A549 (cell line): ENCODE measurements at regions of chr2 and their contacts with region 1.

Region 1: GRCh38 chr2:240913810-240914644 is 7.9 kb downstream of the CROCC2 start:
- DNase-seq: peak; percentile 53 to 66
- ATAC-seq: peak; percentile 41 to 79; a peak in 3 of 6 replicates
- H3K4me3 ChIP-seq: no peak overlapping the region
- H3K27ac ChIP-seq: 0 out of 6 replicates have a peak overlapping the region, but pooled peaks of 1 of the 2 experiments have one; percentile 17
- H3K4me1 ChIP-seq: peaks cover 36% of the 10 kb centered on the region
- CTCF ChIP-seq: peak; percentile 80
- EP300 ChIP-seq: no peak
- POLR2A ChIP-seq: no peak
- RAD21 ChIP-seq: peak; percentile 77 to 87

Region 2: DNA sequence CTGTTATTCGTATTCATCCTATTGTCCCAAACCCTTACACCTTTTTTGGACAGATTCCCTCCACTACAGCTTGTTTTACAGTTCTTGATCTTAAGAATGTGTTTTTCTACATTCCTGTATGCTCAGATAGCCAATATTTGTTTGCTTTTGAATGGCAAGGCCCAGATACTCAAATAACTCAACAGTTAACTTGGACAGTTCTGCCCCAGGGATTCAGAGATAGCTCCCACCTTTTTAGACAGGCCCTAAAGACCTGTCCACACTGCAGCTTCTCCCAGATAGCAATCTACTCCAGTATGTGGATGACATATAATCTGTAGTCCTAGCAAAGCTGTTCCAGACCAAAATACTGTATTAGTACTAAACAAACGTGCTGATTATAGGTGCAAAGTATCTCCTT is 52.5 kb before region 1 on chr2:
- CTCF ChIA-PET with region 1: interaction called, 10 read pairs
- POLR2A ChIA-PET with region 1: no interaction called
- DNase-seq: no peak
- ATAC-seq: no peak
- H3K4me3 ChIP-seq: no peak overlapping the region
- H3K27ac ChIP-seq: no peak overlapping the region
- H3K4me1 ChIP-seq: no peaks in the 10 kb centered on the region
- CTCF ChIP-seq: no peak
- EP300 ChIP-seq: no peak
- POLR2A ChIP-seq: no peak
- RAD21 ChIP-seq: no peak

Region 3: DNA sequence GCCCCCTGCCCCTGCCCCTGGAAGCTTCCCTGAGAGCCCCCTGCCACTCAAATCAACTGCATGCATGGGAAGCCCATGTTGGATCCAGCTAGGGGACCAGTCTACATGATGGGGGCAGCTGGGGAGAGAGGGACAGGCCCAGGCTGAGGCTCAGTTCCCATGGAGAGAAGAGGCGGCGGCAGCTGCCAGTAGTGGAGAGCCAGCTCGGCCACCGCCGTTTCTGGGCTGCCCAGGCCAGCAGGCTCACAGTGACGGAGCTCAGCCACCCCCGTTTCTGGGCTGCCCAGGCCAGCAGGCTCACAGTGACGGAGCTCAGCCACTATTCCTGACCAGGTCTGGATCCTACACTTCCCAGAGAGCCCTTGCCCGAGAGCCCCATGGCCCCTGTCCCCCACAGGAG is 21.7 kb before region 1 on chr2:
- CTCF ChIA-PET with region 1: interaction called, 43 read pairs
- POLR2A ChIA-PET with region 1: no interaction called
- DNase-seq: no peak
- ATAC-seq: no peak
- H3K4me3 ChIP-seq: no peak overlapping the region
- H3K27ac ChIP-seq: no peak overlapping the region
- H3K4me1 ChIP-seq: peaks cover 21% of the 10 kb centered on the region
- CTCF ChIP-seq: no peak
- EP300 ChIP-seq: no peak
- POLR2A ChIP-seq: no peak
- RAD21 ChIP-seq: no peak

Region 4: GRCh38 chr2:240898108-240898730 is 15.8 kb before region 1 on chr2:
- CTCF ChIA-PET with region 1: interaction called, 43 read pairs
- POLR2A ChIA-PET with region 1: no interaction called
- DNase-seq: no peak
- ATAC-seq: peak in 1 of 2 experiments; percentile 7; a peak in 2 of 6 replicates
- H3K4me3 ChIP-seq: no peak overlapping the region
- H3K27ac ChIP-seq: no peak overlapping the region
- H3K4me1 ChIP-seq: peaks cover 21% of the 10 kb centered on the region
- CTCF ChIP-seq: no peak
- EP300 ChIP-seq: no peak
- POLR2A ChIP-seq: no peak
- RAD21 ChIP-seq: no peak

Region 5: GRCh38 chr2:240983361-240983995 is 69.5 kb after region 1 on chr2:
- CTCF ChIA-PET with region 1: interaction called, 27 read pairs
- POLR2A ChIA-PET with region 1: no interaction called
- DNase-seq: peak; percentile 13 to 75
- ATAC-seq: peak; percentile 91 to 96
- H3K4me3 ChIP-seq: 0 out of 3 replicates have a peak overlapping the region, but pooled peaks have one; percentile 26
- H3K27ac ChIP-seq: no peak overlapping the region
- H3K4me1 ChIP-seq: peaks cover 27% of the 10 kb centered on the region
- CTCF ChIP-seq: peak; percentile 64
- EP300 ChIP-seq: no peak
- POLR2A ChIP-seq: no peak
- RAD21 ChIP-seq: peak in 1 of 2 experiments; percentile 45; a peak in 3 of 5 replicates

Region 6: DNA sequence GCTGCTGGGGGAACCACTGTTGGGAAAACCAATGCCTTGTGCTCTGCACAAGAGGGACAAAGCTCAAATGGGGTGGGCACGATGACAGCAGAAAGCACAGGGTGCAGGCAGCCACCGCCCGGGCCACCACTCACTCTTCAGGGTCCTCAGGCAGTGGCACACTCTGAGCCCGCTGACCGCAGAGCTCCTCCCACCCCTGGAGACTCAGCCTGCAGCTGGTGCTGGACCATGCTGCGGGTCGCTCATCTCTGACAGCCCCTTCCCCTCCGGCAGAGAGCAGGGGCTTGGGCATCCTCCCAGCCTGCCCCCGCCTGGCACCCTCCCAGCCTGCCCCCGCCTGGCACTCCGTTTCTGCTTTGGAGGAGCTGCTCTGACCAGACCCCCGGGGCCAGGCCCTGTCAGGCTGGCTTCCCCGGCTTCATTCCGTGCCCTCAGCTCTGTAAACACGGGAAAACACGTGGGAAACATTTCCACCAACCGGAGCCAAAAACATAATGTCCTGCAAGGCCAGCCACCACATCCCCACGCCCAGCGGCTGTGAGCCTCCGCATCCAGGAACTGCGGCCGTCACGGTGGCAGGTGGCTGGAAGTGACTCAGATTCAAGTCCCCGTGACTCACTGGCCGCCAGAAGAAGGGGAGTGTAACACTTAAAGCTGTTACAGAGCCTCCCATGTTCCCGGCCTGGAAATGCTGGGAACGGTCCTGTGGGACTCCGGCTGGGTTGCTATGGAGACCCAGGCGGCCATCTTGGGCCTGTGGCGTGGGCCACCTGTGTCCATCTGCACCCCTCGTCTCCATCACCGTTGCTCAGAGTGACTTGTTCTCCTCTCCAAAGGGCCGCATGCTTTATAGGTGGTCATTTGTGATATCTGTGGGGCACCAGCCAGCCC is 77.6 kb after region 1 on chr2:
- CTCF ChIA-PET with region 1: interaction called, 39 read pairs
- POLR2A ChIA-PET with region 1: no interaction called
- DNase-seq: peak; percentile 49 to 70
- ATAC-seq: peak; percentile 28 to 51
- H3K4me3 ChIP-seq: no peak overlapping the region
- H3K27ac ChIP-seq: peak overlapping the region; percentile 61 to 75; a peak in 5 of 6 replicates
- H3K4me1 ChIP-seq: peaks cover 24% of the 10 kb centered on the region
- CTCF ChIP-seq: no peak
- EP300 ChIP-seq: no peak
- POLR2A ChIP-seq: no peak
- RAD21 ChIP-seq: no peak

Region 7: GRCh38 chr2:241081643-241082340 is 167.8 kb after region 1 on chr2:
- CTCF ChIA-PET with region 1: interaction called, 13 read pairs
- POLR2A ChIA-PET with region 1: no interaction called
- DNase-seq: no peak
- ATAC-seq: peak in 1 of 2 experiments; percentile 12; a peak in 2 of 6 replicates
- H3K4me3 ChIP-seq: no peak overlapping the region
- H3K27ac ChIP-seq: no peak overlapping the region
- H3K4me1 ChIP-seq: no peaks in the 10 kb centered on the region
- CTCF ChIP-seq: no peak
- EP300 ChIP-seq: no peak
- POLR2A ChIP-seq: no peak
- RAD21 ChIP-seq: no peak